Naive thymus-derived CD8-positive, alpha-beta T cell (primary cell): ENCODE measurements at regions of chr1 and their contacts with region 1.

Region 1: GRCh38 chr1:231337472-231338269 is at the start of gene EXOC8:
- DNase-seq: peak; percentile 93 to 99 (median 98)
- ATAC-seq: peak; percentile 81 to 82
- H3K4me3 Mint-ChIP-seq: peak within 1 kb of the TSS; percentile 97 to 100 (median 99)
- H3K27ac Mint-ChIP-seq: peak within 1 kb of the TSS; percentile 99 to 100 (median 100)
- H3K4me1 Mint-ChIP-seq: peaks cover 28 to 75% (median 52%) of the 10 kb centered on the region in 4 donors
- H3K27me3 Mint-ChIP-seq: peaks cover 0 to 5% (median 0%) of the 10 kb centered on the region in 5 donors
- polyA plus RNA-seq, gene EXOC8: 1.9 to 3.0 (median 2.5) TPM

Region 2: DNA sequence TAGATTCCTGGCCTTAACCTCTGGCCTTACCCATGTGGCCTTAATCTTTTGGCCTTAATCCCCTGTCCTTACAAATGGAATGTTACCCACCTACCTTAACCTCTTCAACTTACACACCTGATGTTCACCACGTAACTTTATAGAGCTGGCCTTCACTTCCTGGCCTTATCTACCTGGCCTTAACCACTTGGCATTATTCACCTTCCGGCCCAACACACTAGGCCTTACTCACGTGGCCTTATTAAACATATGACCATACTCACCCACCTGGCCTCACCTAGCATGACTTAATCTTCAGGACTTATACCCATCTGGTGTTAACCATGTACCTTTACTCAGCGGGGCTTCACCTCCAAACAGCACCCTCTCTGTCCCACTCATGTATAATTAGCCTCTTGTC is 41.7 kb before region 1 on chr1:
- POLR2A ChIA-PET with region 1: no interaction called
- DNase-seq: no peak
- ATAC-seq: no peak
- H3K4me3 Mint-ChIP-seq: no peak overlapping the region
- H3K27ac Mint-ChIP-seq: no peak overlapping the region
- H3K4me1 Mint-ChIP-seq: no peaks in the 10 kb centered on the region
- H3K27me3 Mint-ChIP-seq: no peaks in the 10 kb centered on the region

Region 3: GRCh38 chr1:231528172-231529029 is 190.7 kb after region 1 on chr1 and contains the start of gene TSNAX:
- POLR2A ChIA-PET with region 1: interaction called, 10 read pairs
- DNase-seq: peak; percentile 84 to 97 (median 90)
- ATAC-seq: peak; percentile 86 to 88
- H3K4me3 Mint-ChIP-seq: peak within 1 kb of the TSS; percentile 94 to 99 (median 98)
- H3K27ac Mint-ChIP-seq: peak within 1 kb of the TSS; percentile 97 to 100 (median 100)
- H3K4me1 Mint-ChIP-seq: peaks cover 19 to 56% (median 41%) of the 10 kb centered on the region in 4 donors
- H3K27me3 Mint-ChIP-seq: no peaks in the 10 kb centered on the region
- polyA plus RNA-seq, gene TSNAX: 80.9 to 99.7 (median 99.6) TPM